K562 (cell line): ENCODE measurements at regions of chr6 and their contacts with region 1.

Region 1: GRCh38 chr6:43764721-43765120 is 5.3 kb upstream of the VEGFA start:
- DNase-seq: no peak
- ATAC-seq: no peak
- H3K4me3 ChIP-seq: no peak overlapping the region
- H3K27ac ChIP-seq: no peak overlapping the region
- H3K4me1 ChIP-seq: peaks cover 6 to 9% of the 10 kb centered on the region in 2 experiments; a peak in 4 of 5 replicates
- H3K27me3 ChIP-seq: peaks cover 10 to 29% of the 10 kb centered on the region in 2 experiments; a peak in 4 of 5 replicates
- CTCF ChIP-seq: no peak
- EP300 ChIP-seq: no peak
- POLR2A ChIP-seq: no peak
- RAD21 ChIP-seq: no peak

Region 2: DNA sequence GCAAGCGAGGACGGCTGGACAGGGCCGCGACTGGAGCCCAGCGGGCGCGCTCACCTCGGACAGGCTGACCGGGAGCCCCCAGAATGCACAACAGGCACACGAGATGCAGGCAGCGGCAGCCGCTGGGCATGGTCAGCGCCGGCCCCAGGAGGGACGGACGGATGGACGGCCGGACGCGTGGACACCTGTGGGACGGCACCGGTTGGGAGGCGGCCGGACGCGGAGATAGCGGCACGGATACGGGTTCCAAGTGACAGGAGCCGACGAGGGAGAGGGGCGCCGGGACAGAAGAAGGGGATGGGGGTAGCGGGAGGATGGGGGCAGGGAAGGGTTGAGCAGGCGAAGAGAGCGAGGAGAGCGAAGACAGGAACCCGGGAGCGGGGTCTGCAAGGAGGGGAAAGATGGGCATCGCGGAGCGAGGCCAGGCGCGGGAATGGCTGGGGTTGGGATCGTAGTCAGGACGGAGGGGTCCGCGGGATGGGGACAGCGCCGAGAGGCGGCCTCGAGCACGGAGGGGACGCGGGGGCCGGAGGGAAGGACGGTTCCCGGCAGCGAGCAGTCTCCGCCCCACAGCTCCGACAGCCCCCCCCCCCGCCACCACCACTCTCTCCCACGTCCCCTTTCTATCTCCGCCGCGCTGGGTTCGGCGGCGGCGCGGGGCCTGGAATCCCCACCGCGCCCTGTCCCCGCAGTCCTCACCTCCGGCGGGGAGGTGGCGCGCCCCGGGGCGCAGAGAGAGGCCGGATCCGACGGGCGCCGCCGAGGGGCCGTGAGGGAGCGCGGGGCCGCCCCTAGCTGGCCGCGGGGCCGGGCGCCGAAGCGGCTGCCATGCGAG is 309.8 kb before region 1 on chr6:
- CTCF ChIA-PET with region 1: no interaction called
- POLR2A ChIA-PET with region 1: no interaction called
- in situ Hi-C with region 1: no loop called
- intact Hi-C with region 1: no loop called
- DNase-seq: peak; percentile 89 to 90 (median 90)
- ATAC-seq: peak; percentile 96
- H3K4me3 ChIP-seq: peak overlapping the region; percentile 53
- H3K27ac ChIP-seq: no peak overlapping the region
- H3K4me1 ChIP-seq: peaks cover 0 to 18% of the 10 kb centered on the region in 2 experiments; a peak in 4 of 5 replicates
- H3K27me3 ChIP-seq: no peaks in the 10 kb centered on the region; a peak in 1 of 5 replicates
- CTCF ChIP-seq: no peak; a peak in 1 of 6 replicates
- EP300 ChIP-seq: no peak
- POLR2A ChIP-seq: 0 out of 2 replicates have a peak, but pooled peaks have one; percentile 24
- RAD21 ChIP-seq: no peak; a peak in 1 of 4 replicates

Region 3: GRCh38 chr6:43559328-43559727 is 205.4 kb before region 1 on chr6:
- CTCF ChIA-PET with region 1: no interaction called
- POLR2A ChIA-PET with region 1: no interaction called
- in situ Hi-C with region 1: no loop called
- intact Hi-C with region 1: no loop called
- DNase-seq: no peak
- ATAC-seq: no peak; the same call in 2 of the 3 replicates
- H3K4me3 ChIP-seq: no peak overlapping the region
- H3K27ac ChIP-seq: no peak overlapping the region
- H3K4me1 ChIP-seq: no peaks in the 10 kb centered on the region
- H3K27me3 ChIP-seq: no peaks in the 10 kb centered on the region
- CTCF ChIP-seq: no peak
- EP300 ChIP-seq: no peak
- POLR2A ChIP-seq: no peak
- RAD21 ChIP-seq: no peak

Region 4: GRCh38 chr6:43744931-43745710 is 19.6 kb before region 1 on chr6:
- CTCF ChIA-PET with region 1: no interaction called
- POLR2A ChIA-PET with region 1: interaction called, 17 read pairs
- in situ Hi-C with region 1: no loop called
- intact Hi-C with region 1: no loop called
- DNase-seq: no peak
- ATAC-seq: no peak
- H3K4me3 ChIP-seq: no peak overlapping the region
- H3K27ac ChIP-seq: no peak overlapping the region
- H3K4me1 ChIP-seq: peaks cover 7 to 16% of the 10 kb centered on the region in 2 experiments; a peak in 4 of 5 replicates
- H3K27me3 ChIP-seq: no peaks in the 10 kb centered on the region; a peak in 1 of 5 replicates
- CTCF ChIP-seq: no peak
- EP300 ChIP-seq: no peak
- POLR2A ChIP-seq: no peak
- RAD21 ChIP-seq: no peak

Region 5: DNA sequence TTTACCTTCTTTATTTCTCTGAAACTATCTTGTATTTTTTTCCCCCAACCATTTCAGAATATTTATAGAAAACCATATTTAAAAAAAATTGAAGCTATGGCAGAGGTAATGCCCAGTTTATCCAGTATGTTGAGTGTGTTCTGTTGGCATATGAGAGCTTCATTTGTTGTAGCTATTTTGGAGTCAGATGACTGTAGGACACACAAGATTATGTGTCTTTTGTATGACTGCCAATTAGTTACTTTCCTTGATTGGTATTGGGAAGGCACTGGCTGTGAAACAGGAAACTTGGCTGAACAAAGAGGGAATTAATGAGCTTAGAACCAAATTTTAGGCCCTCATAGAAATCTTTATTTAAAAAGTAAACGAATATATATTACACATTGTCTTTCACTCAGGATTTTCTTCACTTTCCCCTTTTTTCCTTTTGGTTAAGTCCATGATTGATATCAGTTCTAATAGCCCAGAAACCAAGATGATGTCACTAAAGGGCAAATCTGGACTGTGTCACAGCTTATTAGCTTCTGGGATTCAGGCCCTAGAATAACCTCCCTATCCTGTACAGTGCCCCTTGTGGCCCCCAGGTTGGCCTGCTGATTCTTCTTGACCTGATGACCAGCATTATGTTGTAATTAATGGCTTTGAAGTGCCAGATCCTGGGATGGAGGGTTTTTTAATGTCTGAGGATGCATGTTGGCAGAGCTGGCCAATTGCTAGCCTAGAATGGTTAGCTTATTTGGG is 632.9 kb after region 1 on chr6:
- CTCF ChIA-PET with region 1: no interaction called
- POLR2A ChIA-PET with region 1: no interaction called
- in situ Hi-C with region 1: no loop called
- intact Hi-C with region 1: no loop called
- DNase-seq: peak in 2 of 4 experiments; percentile 39 to 46
- ATAC-seq: peak; percentile 78
- H3K4me3 ChIP-seq: no peak overlapping the region
- H3K27ac ChIP-seq: no peak overlapping the region
- H3K4me1 ChIP-seq: no peaks in the 10 kb centered on the region
- H3K27me3 ChIP-seq: no peaks in the 10 kb centered on the region
- CTCF ChIP-seq: peak in 2 of 3 experiments; percentile 21 to 35; a peak in 3 of 6 replicates
- EP300 ChIP-seq: no peak
- POLR2A ChIP-seq: no peak
- RAD21 ChIP-seq: no peak